Right ventricle myocardium superior (tissue), 1 donor: ENCODE measurements at regions of chr20 and their contacts with region 1.

Region 1: GRCh38 chr20:22691369-22692118 is 107.2 kb upstream of the FOXA2 start:
- DNase-seq: peak; percentile 84
- ATAC-seq: peak; percentile 95

Region 2: GRCh38 chr20:23050847-23051631 is 359.5 kb after region 1 on chr20:
- intact Hi-C with region 1: loop called (anchors 10 kb)
- DNase-seq: peak; percentile 93
- ATAC-seq: peak; percentile 60

Region 3: DNA sequence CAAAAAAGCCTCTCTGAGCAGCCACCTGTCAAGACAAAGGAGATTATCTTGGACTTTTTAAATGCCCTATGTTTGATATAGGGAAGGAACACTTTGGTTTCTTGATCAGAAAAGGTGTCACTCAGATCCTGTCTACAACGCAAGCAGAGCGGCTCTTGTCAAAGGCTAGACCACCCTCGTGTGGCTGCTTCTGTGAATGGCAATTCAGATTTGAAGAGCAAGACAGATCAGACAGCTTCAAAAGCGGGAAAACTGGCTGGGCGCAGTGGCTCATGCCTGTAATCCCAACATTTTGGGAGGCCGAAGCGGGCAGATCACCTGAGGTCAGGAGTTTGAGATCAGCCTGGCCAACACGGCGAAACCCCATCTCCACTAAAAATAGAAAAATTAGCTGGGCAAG is 649.0 kb after region 1 on chr20:
- intact Hi-C with region 1: loop called (anchors 5 kb)
- DNase-seq: peak; percentile 74
- ATAC-seq: peak; percentile 93